Activated CD4-positive, alpha-beta T cell treated with anti-CD3 and anti-CD28 coated beads for 36 hours (primary cell): ENCODE measurements at regions of chr5 and their contacts with region 1.

Region 1: GRCh38 chr5:10249948-10250803 is at the start of gene CCT5:
- DNase-seq: peak; percentile 93
- ATAC-seq: peak; percentile 82
- H3K4me3 Mint-ChIP-seq: peak within 1 kb of the TSS; percentile 92
- H3K27ac Mint-ChIP-seq: peak within 1 kb of the TSS; percentile 100
- H3K4me1 Mint-ChIP-seq: peaks cover 47% of the 10 kb centered on the region
- H3K27me3 Mint-ChIP-seq: no peaks in the 10 kb centered on the region
- total RNA-seq, gene CCT5: 347 to 461 TPM

Region 2: GRCh38 chr5:9582406-9582805 is 667.8 kb before region 1 on chr5:
- CTCF ChIA-PET with region 1: no interaction called
- POLR2A ChIA-PET with region 1: no interaction called
- intact Hi-C with region 1: no loop called
- DNase-seq: no peak
- ATAC-seq: no peak
- H3K4me3 Mint-ChIP-seq: no peak overlapping the region
- H3K27ac Mint-ChIP-seq: no peak overlapping the region
- H3K4me1 Mint-ChIP-seq: no peaks in the 10 kb centered on the region
- H3K27me3 Mint-ChIP-seq: no peaks in the 10 kb centered on the region

Region 3: GRCh38 chr5:10418654-10419345 is 168.6 kb after region 1 on chr5:
- CTCF ChIA-PET with region 1: interaction called, 4 read pairs
- POLR2A ChIA-PET with region 1: interaction called, 4 read pairs
- intact Hi-C with region 1: loop called in 1 of 2 experiments (anchors 1 kb)
- DNase-seq: peak; percentile 19
- ATAC-seq: peak; percentile 90
- H3K4me3 Mint-ChIP-seq: no peak overlapping the region
- H3K27ac Mint-ChIP-seq: no peak overlapping the region
- H3K4me1 Mint-ChIP-seq: peaks cover 53% of the 10 kb centered on the region
- H3K27me3 Mint-ChIP-seq: no peaks in the 10 kb centered on the region

Region 4: DNA sequence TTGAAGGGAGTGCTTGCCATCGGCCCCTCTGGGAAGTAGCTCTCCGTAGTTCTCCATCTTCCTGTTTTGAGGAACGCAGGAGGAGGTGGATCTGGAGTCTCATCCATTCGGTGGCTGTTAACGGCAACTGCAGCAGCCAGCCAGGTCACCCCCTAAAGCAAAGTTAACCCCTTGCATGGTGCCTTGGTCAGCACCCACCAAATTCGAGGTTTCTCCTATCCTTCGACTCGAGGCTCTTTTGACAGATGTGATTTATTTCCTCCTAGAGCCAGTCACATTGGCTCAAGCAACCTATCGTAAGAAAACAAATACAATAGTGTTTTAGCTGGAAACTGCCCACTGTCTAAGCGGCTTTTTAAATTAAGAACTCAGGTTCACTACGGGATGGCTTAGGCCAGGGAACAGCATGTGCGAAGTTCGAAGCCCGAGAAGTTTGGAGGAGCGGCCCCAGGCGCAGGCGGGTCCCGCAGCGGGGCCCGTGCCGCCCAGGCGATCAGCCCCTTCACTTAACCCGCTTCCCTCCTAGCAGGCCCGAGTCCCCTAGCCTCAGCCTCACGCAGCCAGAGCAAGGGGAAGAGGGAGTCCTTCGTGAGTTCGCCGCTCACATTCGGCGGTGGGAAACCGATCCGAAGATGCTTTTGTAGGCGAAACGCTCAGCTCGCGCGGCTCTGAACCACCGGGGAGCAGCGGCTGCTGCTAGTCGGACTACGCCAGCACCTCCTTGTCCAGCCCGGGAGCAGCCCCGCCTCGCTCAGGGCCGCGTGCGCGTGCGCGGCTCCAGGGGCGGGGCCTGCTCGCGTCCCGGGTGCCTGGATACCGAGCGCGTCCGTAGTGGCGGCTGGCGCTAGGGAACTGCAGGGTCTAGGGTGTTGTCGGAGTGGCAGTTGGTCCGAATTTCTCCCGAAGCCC is 191.2 kb after region 1 on chr5 and contains the start of gene ROPN1L:
- CTCF ChIA-PET with region 1: interaction called, 3 read pairs
- POLR2A ChIA-PET with region 1: no interaction called
- intact Hi-C with region 1: loop called in 1 of 2 experiments (anchors 1 kb)
- DNase-seq: peak; percentile 87
- ATAC-seq: peak; percentile 98
- H3K4me3 Mint-ChIP-seq: peak within 1 kb of the TSS; percentile 72
- H3K27ac Mint-ChIP-seq: no peak within 1 kb of the TSS
- H3K4me1 Mint-ChIP-seq: peaks cover 31% of the 10 kb centered on the region
- H3K27me3 Mint-ChIP-seq: peaks cover 3% of the 10 kb centered on the region
- total RNA-seq, gene ROPN1L: 0.28 TPM in 1 of 2 experiments, not detected in the other

Region 5: GRCh38 chr5:10761166-10761932 is 511.2 kb after region 1 on chr5 and contains the start of gene DAP:
- CTCF ChIA-PET with region 1: no interaction called
- POLR2A ChIA-PET with region 1: no interaction called
- intact Hi-C with region 1: loop called in 1 of 2 experiments (anchors 1 kb)
- DNase-seq: peak; percentile 92
- ATAC-seq: peak; percentile 82
- H3K4me3 Mint-ChIP-seq: peak within 1 kb of the TSS; percentile 83
- H3K27ac Mint-ChIP-seq: peak within 1 kb of the TSS; percentile 90
- H3K4me1 Mint-ChIP-seq: peaks cover 49% of the 10 kb centered on the region
- H3K27me3 Mint-ChIP-seq: peaks cover 3% of the 10 kb centered on the region
- total RNA-seq, gene DAP: 41.4 to 44.0 TPM